Activated T-helper 1 cell treated with anti-CD3 and anti-CD28 coated beads, Interleukin-12 subunit alpha, Interleukin-12 subunit beta, Interleukin-2, Interleukin-4 antibody, amounts not matched to agents 30 ng/mL and 10 ng/mL and 1 ng/mL, durations not matched to agents 14 hours and 24 hours and 36 hours (primary cell): ENCODE measurements at regions of chr1 and their contacts with region 1.

Region 1: DNA sequence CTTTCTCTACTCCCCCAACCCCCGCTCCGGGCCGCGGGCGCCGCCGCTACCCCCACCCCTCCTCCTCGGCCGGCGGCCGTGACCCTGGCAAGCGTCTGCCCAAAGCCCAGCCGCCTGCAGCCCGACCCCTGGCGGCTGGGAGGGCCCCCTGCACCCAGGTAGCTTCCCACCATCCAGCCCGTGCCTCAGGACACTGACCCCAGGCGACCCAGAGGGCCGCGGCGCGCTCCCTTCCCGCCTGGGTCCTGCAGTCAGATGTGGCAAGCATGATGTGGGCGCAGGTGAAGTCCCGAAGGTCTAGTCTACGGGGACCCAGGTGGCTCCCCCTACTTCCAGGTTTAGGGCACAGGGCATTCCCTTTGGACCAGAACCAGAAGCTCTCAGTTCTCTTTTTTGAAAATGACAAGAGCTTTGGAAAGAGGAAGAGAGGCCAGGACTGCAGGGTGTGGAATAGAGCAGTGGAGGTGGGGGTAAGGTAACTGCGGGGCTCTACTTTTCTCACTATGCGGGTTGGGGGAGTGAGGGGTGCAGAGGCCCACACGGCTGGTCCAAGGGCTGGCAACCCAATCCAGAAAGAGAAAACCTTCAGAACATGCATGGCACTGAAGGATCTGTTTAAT is at the start of gene DENND4B:
- DNase-seq: peak; percentile 74
- H3K4me3 Mint-ChIP-seq: peak within 1 kb of the TSS; percentile 88
- H3K27ac Mint-ChIP-seq: peak within 1 kb of the TSS; percentile 97
- H3K4me1 Mint-ChIP-seq: peaks cover 35% of the 10 kb centered on the region
- H3K27me3 Mint-ChIP-seq: no peaks in the 10 kb centered on the region
- total RNA-seq, gene DENND4B: 128 and 133 TPM in 2 replicates

Region 2: GRCh38 chr1:153796791-153797659 is 149.7 kb before region 1 on chr1:
- intact Hi-C with region 1: loop called (anchors 1 kb)
- DNase-seq: peak; percentile 69
- H3K4me3 Mint-ChIP-seq: no peak overlapping the region
- H3K27ac Mint-ChIP-seq: peak overlapping the region; percentile 31
- H3K4me1 Mint-ChIP-seq: peaks cover 17% of the 10 kb centered on the region
- H3K27me3 Mint-ChIP-seq: no peaks in the 10 kb centered on the region

Region 3: GRCh38 chr1:153816283-153816889 is 130.3 kb before region 1 on chr1:
- intact Hi-C with region 1: loop called (anchors 1 kb)
- DNase-seq: no peak
- H3K4me3 Mint-ChIP-seq: no peak overlapping the region
- H3K27ac Mint-ChIP-seq: no peak overlapping the region
- H3K4me1 Mint-ChIP-seq: no peaks in the 10 kb centered on the region
- H3K27me3 Mint-ChIP-seq: no peaks in the 10 kb centered on the region

Region 4: GRCh38 chr1:153958111-153958960 is 11.6 kb after region 1 on chr1 and contains the start of gene CRTC2:
- intact Hi-C with region 1: loop called (anchors 1 kb)
- DNase-seq: peak; percentile 96
- H3K4me3 Mint-ChIP-seq: peak within 1 kb of the TSS; percentile 97
- H3K27ac Mint-ChIP-seq: peak within 1 kb of the TSS; percentile 81
- H3K4me1 Mint-ChIP-seq: peaks cover 65% of the 10 kb centered on the region
- H3K27me3 Mint-ChIP-seq: no peaks in the 10 kb centered on the region
- total RNA-seq, gene CRTC2: 62.8 and 76.4 TPM in 2 replicates

Region 5: DNA sequence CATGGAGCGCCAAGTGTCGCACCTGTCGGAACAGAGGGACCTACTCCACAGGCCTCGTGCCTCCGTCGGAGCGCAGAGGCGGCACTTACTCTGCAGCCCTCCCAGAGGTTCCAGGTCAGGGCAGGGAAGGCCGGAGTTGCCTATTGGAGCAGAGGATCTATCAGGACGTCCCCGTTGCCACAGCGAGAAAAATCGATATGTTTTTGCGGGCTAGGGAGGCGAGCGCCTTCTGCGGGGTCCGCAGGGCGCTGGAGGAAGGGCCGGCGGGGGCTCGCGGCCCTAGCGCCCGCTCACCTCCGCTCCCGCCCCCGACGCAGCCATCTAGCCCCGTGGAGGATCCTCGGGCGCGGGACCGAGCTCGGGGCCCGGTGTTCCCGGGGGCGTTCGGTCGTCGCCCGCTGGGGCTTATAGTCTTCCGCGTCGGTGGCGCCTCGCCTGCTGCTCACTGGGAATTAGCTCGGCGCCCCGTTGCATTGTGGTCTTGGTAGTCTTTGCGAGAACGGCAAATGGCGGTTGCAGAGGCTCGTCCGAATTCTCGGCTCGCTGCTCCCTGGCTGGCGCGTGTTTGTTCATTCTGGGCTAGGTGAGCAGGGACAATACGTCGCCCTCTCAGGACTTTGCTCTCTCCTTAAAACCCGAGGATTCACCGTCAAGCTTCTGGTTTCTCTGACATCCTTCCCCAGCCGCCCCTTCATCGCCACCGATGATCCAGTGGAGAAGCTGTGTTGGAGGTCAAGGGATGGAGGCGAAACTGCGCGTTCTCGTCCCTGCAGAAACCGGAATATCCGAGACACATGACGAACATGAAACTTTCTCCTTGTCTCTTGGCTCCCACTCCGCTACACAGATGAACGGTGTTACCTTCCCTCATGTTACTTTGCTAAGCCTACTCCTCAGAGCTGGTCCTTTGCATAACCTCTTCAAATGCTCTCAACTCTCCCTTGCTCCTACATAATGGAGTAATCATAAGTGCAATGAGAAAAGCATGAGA is 30.8 kb after region 1 on chr1 and contains the start of gene JTB:
- intact Hi-C with region 1: loop called (anchors 1 kb)
- DNase-seq: peak; percentile 80
- H3K4me3 Mint-ChIP-seq: peak within 1 kb of the TSS; percentile 94
- H3K27ac Mint-ChIP-seq: peak within 1 kb of the TSS; percentile 95
- H3K4me1 Mint-ChIP-seq: peaks cover 33% of the 10 kb centered on the region
- H3K27me3 Mint-ChIP-seq: no peaks in the 10 kb centered on the region
- total RNA-seq, gene JTB: 198 and 213 TPM in 2 replicates